Activated CD8-positive, alpha-beta memory T cell treated with anti-CD3 and anti-CD28 coated beads, Interleukin-2, amount 10 ng/mL, durations not matched to agents 7 days and 5 days (primary cell): ENCODE measurements at regions of chr6 and their contacts with region 1.

Region 1: DNA sequence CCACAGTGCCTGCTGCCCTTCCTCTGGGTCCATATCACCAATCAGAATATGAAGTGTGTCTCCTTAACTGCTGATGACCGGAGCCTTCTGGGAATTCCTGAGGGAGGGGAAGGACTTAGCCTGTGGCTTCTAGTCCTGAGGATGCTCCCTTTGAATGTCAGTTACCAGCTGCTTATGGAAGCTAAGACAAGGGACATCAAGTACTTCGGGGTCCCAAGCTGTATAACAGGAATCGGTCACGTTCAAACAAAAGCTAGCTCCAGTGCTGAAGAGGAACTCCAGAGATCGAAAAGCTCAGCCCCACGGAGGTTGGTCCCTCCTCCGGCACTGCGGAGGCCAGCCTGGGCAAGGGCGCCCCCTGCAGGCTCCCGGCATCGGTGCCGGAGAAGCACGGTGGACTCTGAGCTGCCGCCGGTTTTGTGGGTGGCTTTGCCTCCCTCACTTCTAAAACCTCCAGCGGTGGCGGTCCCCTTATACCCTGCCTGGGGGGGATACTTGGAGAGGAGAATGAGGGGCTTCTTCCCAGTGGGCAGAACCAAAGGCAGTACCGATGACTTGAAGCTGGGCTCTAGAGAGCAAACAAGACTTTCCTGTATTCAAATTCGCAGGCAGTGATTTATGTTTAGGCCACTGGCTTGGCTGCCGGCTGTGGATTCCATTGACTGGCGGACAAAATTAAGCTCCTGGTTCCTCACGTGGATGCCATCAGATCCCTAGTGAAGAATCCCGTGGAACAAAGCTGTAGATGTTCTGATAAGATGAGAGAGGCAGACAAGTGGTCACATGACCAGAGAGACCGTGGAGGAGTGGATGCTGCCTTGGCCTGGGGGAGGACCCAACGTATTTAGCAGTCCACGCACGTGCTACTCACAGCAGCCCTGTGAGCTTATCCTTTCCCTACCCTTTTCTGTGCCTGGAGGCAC is 16.2 kb upstream of the UBR2 start:
- DNase-seq: peak; percentile 91
- ATAC-seq: peak; percentile 100
- H3K4me3 Mint-ChIP-seq: peak overlapping the region; percentile 59
- H3K27ac Mint-ChIP-seq: peak overlapping the region; percentile 40
- H3K4me1 Mint-ChIP-seq: peaks cover 22% of the 10 kb centered on the region
- H3K27me3 Mint-ChIP-seq: peaks cover 10% of the 10 kb centered on the region

Region 2: GRCh38 chr6:42212442-42212841 is 335.2 kb before region 1 on chr6:
- CTCF ChIA-PET with region 1: interaction called, 30 read pairs
- DNase-seq: no peak
- ATAC-seq: no peak
- H3K4me3 Mint-ChIP-seq: no peak overlapping the region
- H3K27ac Mint-ChIP-seq: no peak overlapping the region
- H3K4me1 Mint-ChIP-seq: peaks cover 28% of the 10 kb centered on the region
- H3K27me3 Mint-ChIP-seq: no peaks in the 10 kb centered on the region

Region 3: DNA sequence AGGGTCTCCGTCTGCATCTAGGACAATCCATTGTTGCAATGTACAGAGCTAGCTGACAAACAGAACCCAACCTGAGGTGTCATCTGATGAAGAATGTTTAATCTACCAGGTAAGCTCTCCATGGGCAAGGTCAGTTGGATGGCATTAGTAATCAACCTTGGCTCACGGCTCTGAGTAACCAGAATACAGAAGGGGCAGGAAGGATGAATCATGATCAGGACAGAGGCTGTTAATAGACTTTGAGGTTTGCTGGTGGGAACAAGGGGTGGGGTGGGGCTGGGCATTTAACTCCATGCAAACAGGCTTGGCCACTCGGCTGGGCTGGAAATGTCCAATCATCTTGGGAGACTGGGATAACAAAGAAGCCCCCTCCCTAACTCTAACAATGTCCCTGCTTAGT is 252.9 kb before region 1 on chr6:
- CTCF ChIA-PET with region 1: interaction called, 14 read pairs
- DNase-seq: no peak
- ATAC-seq: peak; percentile 31
- H3K4me3 Mint-ChIP-seq: no peak overlapping the region
- H3K27ac Mint-ChIP-seq: peak overlapping the region; percentile 79
- H3K4me1 Mint-ChIP-seq: peaks cover 67% of the 10 kb centered on the region
- H3K27me3 Mint-ChIP-seq: no peaks in the 10 kb centered on the region

Region 4: DNA sequence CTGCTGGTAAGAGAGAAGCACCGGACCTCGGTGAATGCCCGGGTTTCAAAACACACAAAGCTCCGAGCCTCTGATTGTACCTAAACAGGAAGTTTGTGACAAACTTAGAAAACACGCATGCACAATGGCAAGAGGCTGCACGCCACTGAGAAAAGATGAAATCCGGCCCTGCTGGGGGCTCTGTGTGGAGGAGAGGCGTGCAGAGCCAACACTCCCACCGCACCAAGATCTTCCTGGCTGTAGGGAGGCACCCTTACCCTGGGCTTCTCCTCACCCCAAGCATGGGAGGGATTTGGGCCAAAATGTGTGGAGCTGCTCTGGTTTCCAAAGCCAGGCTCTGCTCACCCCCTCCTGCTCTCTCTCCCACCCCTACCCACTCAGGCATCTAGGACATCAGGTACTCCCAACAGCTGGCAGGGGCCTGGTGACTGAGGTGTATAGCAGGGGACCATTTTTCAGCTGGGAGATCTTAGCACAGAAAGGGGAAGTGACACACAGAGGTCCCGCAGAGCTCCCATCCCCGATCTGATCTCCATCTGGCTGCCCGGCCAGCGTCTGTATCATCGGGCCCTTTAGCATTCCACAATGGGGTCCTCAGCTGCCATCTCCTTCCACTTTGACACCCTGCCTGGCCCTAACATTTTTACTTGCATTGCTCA is 180.2 kb before region 1 on chr6:
- CTCF ChIA-PET with region 1: interaction called, 20 read pairs
- DNase-seq: peak; percentile 71
- ATAC-seq: peak; percentile 54
- H3K4me3 Mint-ChIP-seq: peak overlapping the region; percentile 66
- H3K27ac Mint-ChIP-seq: peak overlapping the region; percentile 97
- H3K4me1 Mint-ChIP-seq: peaks cover 86% of the 10 kb centered on the region
- H3K27me3 Mint-ChIP-seq: no peaks in the 10 kb centered on the region

Region 5: GRCh38 chr6:42440778-42441696 is 106.6 kb before region 1 on chr6:
- CTCF ChIA-PET with region 1: interaction called, 16 read pairs
- DNase-seq: no peak
- ATAC-seq: peak; percentile 17
- H3K4me3 Mint-ChIP-seq: peak overlapping the region; percentile 37
- H3K27ac Mint-ChIP-seq: peak overlapping the region; percentile 50
- H3K4me1 Mint-ChIP-seq: peaks cover 50% of the 10 kb centered on the region
- H3K27me3 Mint-ChIP-seq: no peaks in the 10 kb centered on the region

Region 6: DNA sequence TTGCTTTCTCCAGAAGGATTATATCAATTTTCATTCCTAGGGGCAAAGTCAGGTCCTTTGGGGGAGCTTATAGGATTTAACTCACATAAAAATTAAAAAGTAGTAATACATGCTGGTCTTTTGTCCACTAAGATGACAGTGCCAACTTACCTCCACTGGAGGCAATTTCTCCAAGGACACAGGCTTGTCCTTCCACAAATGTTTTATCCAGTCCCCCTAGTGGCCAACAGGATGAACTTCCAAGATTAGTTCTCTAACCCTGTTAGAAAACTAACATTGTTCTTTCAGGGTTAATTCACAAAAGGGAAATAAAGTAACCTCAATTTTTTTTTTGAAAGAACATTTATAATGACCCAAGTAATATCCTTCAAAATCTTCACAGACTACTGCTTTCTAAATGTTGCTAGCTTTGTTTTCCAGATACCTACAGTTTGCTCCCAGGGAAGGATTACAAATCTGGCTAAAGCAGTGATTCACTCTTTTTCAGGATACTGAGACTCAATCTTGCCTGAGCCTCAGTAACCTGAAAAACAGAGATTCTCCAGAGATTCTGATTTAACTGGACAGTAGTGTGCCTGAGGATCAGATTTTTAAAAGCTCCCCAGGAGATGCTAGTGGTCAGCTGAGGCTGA is 15.5 kb before region 1 on chr6:
- CTCF ChIA-PET with region 1: interaction called, 48 read pairs
- DNase-seq: no peak
- ATAC-seq: peak; percentile 67
- H3K4me3 Mint-ChIP-seq: no peak overlapping the region
- H3K27ac Mint-ChIP-seq: no peak overlapping the region
- H3K4me1 Mint-ChIP-seq: no peaks in the 10 kb centered on the region
- H3K27me3 Mint-ChIP-seq: no peaks in the 10 kb centered on the region